GM12878 (cell line): ENCODE measurements at regions of chr11 and their contacts with region 1.

Region 1: GRCh38 chr11:10540923-10541560 is at the start of gene RNF141:
- DNase-seq: peak; percentile 60
- ATAC-seq: peak; percentile 99
- H3K4me3 ChIP-seq: peak within 1 kb of the TSS; percentile 64
- H3K27ac ChIP-seq: peak within 1 kb of the TSS; percentile 22; the same call in 1 of the 2 replicates
- H3K4me1 ChIP-seq: peaks cover 5% of the 10 kb centered on the region
- H3K27me3 ChIP-seq: peaks cover 0 to 5% of the 10 kb centered on the region in 2 experiments; a peak in 1 of 4 replicates
- CTCF ChIP-seq: peak; percentile 80 to 93 (median 91); a peak in 5 of 6 replicates
- EP300 ChIP-seq: no peak
- POLR2A ChIP-seq: peak; percentile 98
- RAD21 ChIP-seq: peak; percentile 47
- polyA plus RNA-seq, gene RNF141: 21.2 to 36.8 TPM

Region 2: GRCh38 chr11:10441652-10442503 is 99.2 kb before region 1 on chr11:
- CTCF ChIA-PET with region 1: interaction called, 14 read pairs
- POLR2A ChIA-PET with region 1: no interaction called
- RAD21 ChIA-PET with region 1: interaction called, 5 read pairs
- SMC1A ChIA-PET with region 1: interaction called, 3 read pairs
- in situ Hi-C with region 1: no loop called
- intact Hi-C with region 1: no loop called
- DNase-seq: peak; percentile 82
- ATAC-seq: peak; percentile 96
- H3K4me3 ChIP-seq: no peak overlapping the region
- H3K27ac ChIP-seq: no peak overlapping the region; the same call in 1 of the 2 replicates
- H3K4me1 ChIP-seq: peaks cover 18% of the 10 kb centered on the region
- H3K27me3 ChIP-seq: peaks cover 0 to 3% of the 10 kb centered on the region in 2 experiments; a peak in 1 of 4 replicates
- CTCF ChIP-seq: no peak
- EP300 ChIP-seq: peak; percentile 72 to 88; a peak in 3 of 4 replicates
- POLR2A ChIP-seq: no peak
- RAD21 ChIP-seq: no peak

Region 3: DNA sequence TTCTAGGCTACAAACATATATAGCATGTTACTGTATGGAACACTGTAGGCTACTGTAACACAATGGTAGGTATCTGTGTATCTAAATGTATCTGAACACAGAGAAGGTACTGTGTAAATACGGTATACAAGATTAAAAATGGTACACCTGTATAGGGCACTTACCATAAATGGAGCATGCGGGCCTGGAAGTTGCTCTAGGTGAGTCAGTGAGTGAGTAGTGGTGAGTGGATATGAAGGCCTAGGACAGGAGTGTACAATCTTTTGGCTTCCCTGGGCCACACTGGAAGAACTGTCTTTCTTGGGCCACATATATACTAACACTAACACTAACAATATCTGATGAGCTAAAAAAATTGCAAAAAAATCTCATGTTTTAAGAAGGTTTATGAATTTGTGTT is 21.4 kb before region 1 on chr11:
- CTCF ChIA-PET with region 1: interaction called, 15 read pairs
- POLR2A ChIA-PET with region 1: no interaction called
- RAD21 ChIA-PET with region 1: interaction called, 3 read pairs
- SMC1A ChIA-PET with region 1: interaction called, 9 read pairs
- in situ Hi-C with region 1: no loop called
- intact Hi-C with region 1: no loop called
- DNase-seq: no peak
- ATAC-seq: no peak
- H3K4me3 ChIP-seq: no peak overlapping the region
- H3K27ac ChIP-seq: no peak overlapping the region
- H3K4me1 ChIP-seq: no peaks in the 10 kb centered on the region
- H3K27me3 ChIP-seq: no peaks in the 10 kb centered on the region
- CTCF ChIP-seq: no peak
- EP300 ChIP-seq: no peak
- POLR2A ChIP-seq: no peak
- RAD21 ChIP-seq: no peak

Region 4: GRCh38 chr11:10526974-10527918 is 13.8 kb before region 1 on chr11:
- CTCF ChIA-PET with region 1: interaction called, 29 read pairs
- POLR2A ChIA-PET with region 1: interaction called, 3 read pairs
- RAD21 ChIA-PET with region 1: interaction called, 7 read pairs
- SMC1A ChIA-PET with region 1: interaction called, 6 read pairs
- in situ Hi-C with region 1: no loop called
- intact Hi-C with region 1: no loop called
- DNase-seq: peak; percentile 70
- ATAC-seq: peak; percentile 98
- H3K4me3 ChIP-seq: no peak overlapping the region
- H3K27ac ChIP-seq: no peak overlapping the region
- H3K4me1 ChIP-seq: peaks cover 7% of the 10 kb centered on the region
- H3K27me3 ChIP-seq: no peaks in the 10 kb centered on the region
- CTCF ChIP-seq: no peak
- EP300 ChIP-seq: peak in 1 of 2 experiments; percentile 59; a peak in 1 of 4 replicates
- POLR2A ChIP-seq: no peak
- RAD21 ChIP-seq: no peak

Region 5: DNA sequence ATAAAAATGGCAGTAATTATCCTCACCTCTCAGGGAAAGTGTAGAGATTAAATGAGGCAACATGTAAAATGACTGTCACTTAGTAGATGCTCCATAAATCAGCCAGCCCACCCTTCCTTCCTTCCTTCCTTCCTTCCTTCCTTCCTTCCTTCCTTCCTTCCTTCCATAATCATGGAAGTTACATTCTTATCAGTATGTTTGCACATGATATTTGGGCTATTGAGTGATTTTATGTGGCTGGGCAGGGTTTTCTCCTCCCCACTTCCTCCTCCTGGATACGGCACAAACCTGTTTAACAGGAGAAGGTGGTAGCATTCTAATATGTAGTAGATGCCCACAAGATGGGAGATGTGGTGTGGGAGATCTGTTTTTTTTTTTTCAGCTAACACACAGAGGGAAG is 15.5 kb after region 1 on chr11:
- CTCF ChIA-PET with region 1: interaction called, 20 read pairs
- POLR2A ChIA-PET with region 1: no interaction called
- RAD21 ChIA-PET with region 1: no interaction called
- SMC1A ChIA-PET with region 1: interaction called, 5 read pairs
- in situ Hi-C with region 1: no loop called
- intact Hi-C with region 1: no loop called
- DNase-seq: no peak
- ATAC-seq: no peak
- H3K4me3 ChIP-seq: no peak overlapping the region
- H3K27ac ChIP-seq: no peak overlapping the region
- H3K4me1 ChIP-seq: no peaks in the 10 kb centered on the region
- H3K27me3 ChIP-seq: peaks cover 0 to 4% of the 10 kb centered on the region in 2 experiments; a peak in 3 of 4 replicates
- CTCF ChIP-seq: no peak
- EP300 ChIP-seq: no peak
- POLR2A ChIP-seq: no peak
- RAD21 ChIP-seq: no peak

Region 6: DNA sequence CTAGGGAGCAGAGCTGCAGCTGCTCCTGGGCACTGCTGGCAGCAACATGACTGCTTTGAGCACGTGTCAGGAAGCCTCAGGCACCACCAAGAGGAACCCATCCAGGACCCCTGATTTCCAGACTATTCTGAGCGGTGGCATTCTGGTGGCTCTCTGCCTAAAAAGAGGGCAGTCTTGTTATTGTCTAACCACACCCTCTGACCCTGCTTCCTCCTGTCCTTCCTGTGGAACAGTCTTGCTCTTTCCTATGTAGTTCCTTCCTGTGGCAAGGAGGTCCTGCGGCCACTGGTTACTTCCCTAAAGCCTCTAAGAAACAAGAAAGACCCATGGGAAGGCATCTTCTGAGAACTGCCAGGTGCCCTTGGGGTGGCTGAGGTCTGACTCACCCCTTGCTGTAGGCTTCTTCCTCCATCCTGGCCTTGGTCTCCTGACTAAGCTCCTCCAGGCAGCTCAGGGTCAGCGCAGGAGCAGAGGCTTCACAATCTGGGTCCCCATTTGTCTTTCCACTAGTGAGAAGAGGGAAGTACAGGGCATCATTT is 40.5 kb after region 1 on chr11:
- CTCF ChIA-PET with region 1: no interaction called
- POLR2A ChIA-PET with region 1: no interaction called
- RAD21 ChIA-PET with region 1: no interaction called
- SMC1A ChIA-PET with region 1: no interaction called
- in situ Hi-C with region 1: no loop called
- intact Hi-C with region 1: no loop called
- DNase-seq: no peak
- ATAC-seq: no peak
- H3K4me3 ChIP-seq: no peak overlapping the region
- H3K27ac ChIP-seq: no peak overlapping the region
- H3K4me1 ChIP-seq: no peaks in the 10 kb centered on the region
- H3K27me3 ChIP-seq: peaks cover 2 to 5% of the 10 kb centered on the region in 2 experiments
- CTCF ChIP-seq: no peak
- EP300 ChIP-seq: no peak
- POLR2A ChIP-seq: no peak
- RAD21 ChIP-seq: no peak